ENCODE measurements at regions of chr17 and their contacts with region 1.

Region 1: DNA sequence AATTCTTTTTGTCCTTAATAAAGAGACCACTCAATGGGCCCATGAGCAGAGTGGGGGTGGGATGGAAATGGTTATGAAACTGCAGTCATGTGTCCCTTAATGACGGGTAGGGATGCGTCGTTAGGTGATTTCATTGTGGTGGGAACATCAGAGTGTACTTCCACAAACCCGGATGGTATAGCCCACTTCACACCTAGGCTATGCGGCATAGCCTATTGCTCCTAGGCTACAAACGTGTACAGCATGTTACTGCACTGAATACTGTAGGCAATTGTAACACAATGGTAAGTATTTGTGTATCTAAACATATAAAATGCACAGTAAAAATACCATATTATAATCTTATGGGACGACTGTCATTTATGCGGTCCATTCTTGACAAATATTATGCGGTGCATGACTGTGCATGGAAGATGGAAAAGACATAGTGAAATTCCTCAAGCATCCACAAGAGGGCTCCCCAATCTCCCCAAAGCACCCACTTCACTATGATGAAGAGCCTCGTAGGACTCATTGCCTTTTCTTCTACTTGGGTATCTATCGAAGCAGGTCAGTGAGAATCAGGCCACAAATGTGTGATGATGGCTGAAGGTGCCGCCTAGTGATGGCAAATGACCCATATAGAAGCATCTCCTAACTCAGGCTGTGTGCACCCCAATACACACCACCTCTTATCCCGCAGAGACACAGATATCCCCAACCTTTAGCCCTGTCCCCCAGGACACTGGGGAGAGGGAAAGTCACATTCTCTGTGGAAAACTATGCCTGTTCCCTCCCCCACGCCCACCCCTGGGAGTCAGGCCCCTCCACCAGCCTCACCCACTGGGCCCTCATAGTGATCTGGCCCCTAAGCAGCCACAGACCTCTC is 43.5 kb downstream of the TBX21 start:
- DNase-seq: peak; percentile 29
- H3K4me3 ChIP-seq: no peak overlapping the region
- H3K27ac ChIP-seq: no peak overlapping the region
- H3K4me1 ChIP-seq: no peaks in the 10 kb centered on the region
- H3K27me3 ChIP-seq: peaks cover 17% of the 10 kb centered on the region
- CTCF ChIP-seq: peak; percentile 61 to 75

Region 2: GRCh38 chr17:47725446-47726111 is 51.0 kb before region 1 on chr17:
- CTCF ChIA-PET with region 1: no interaction called
- dilution Hi-C with region 1: loop called (anchors 5 kb)
- in situ Hi-C with region 1: no loop called
- intact Hi-C with region 1: no loop called
- DNase-seq: no peak
- H3K4me3 ChIP-seq: no peak overlapping the region
- H3K27ac ChIP-seq: no peak overlapping the region
- H3K4me1 ChIP-seq: peaks cover 5% of the 10 kb centered on the region
- H3K27me3 ChIP-seq: peaks cover 5% of the 10 kb centered on the region
- CTCF ChIP-seq: no peak

Region 3: DNA sequence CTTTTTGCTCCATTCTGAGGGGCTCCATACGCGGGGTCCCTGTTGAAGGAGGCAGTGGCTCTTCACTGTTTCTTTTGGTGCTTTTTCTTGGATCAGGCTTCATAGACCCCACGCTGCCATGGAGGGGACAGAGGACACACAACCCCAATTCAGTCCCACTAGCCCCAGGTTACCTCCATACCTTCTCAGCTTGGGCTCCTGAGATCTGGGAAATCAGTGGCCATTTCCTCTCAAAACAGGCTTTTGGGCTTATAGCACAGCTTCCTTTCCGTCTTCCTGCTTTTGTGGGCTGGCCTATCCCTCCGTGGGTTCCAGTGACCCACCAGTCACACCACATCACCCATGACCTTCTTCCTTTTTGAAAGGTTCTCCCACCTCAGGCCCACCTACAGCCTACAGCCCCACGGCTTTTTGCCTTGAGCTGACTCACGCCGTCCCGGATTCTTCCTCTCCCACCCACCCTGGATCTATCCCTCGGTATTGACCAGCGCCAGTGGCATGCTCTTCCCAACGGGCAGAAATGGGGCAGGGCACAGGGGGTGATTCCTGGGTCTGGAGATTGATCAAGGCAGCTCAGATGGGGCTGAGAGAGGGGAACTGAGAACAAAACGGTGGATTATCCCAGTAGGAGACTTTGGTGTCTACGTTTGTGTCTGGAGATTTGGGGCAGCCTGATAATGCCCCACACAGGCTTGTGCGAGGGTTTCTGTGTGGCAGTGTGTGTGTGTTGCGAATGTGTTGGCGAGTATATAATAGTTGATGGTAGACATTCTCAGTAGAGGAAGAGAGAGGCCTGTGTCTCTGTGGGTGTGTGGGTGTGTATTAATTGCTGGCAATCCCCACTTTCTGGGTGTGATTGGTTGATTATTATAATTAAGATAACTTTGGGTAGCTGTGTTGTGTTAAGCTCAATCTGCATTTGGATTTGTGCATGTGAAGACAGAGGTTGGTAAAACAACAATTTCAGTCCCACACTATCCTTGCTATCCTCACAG is 39.8 kb before region 1 on chr17:
- CTCF ChIA-PET with region 1: no interaction called
- dilution Hi-C with region 1: no loop called
- in situ Hi-C with region 1: no loop called
- intact Hi-C with region 1: no loop called
- DNase-seq: no peak
- H3K4me3 ChIP-seq: no peak overlapping the region
- H3K27ac ChIP-seq: no peak overlapping the region
- H3K4me1 ChIP-seq: peaks cover 5% of the 10 kb centered on the region
- H3K27me3 ChIP-seq: peaks cover 26% of the 10 kb centered on the region
- CTCF ChIP-seq: no peak

Region 4: DNA sequence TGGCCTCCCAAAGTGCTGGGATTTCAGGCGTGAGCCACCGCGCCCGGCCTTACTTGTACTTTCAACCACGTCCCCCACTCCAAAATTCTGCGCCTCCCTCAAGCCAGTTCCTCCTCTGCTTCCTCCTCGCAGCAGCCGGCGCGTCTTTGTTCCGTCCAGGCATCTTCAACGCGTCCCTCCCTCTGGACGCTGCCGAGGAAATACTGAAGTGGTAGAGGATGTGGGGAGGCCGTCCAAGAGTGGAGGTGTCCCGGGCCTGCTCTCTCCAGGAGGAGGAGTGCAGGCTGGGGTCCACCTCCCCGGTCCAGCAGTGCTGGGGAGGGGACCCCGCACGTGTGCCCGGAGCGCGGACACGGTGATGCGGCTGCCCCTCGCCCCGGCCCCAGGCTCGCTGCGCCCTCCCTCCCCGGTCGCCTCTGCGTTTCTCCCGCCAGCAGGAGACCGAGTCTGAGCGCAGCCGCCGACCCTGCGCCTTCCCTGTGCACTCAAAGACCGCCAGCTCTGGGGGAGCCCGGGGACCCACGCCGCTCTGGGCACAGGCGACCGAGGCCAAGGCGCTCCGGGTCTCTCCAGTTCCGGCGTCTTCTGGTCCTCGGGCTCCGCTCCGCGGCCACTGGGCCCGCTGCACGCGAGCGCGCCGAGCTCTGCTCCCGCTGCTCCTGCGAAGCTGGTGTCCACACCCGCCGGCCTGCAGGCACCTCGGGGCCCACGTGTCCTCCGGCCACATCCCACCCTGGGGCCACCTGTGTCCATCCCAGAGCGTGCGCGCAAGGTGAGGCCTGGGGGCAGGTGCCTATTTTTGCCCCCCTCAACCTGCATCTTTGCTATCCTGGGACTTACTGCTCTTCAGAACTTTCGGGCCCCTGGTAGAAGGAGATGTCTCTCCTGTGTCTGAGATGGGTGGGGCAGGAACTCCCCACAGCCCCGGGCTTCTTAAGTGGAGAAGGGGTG is 13.3 kb after region 1 on chr17:
- CTCF ChIA-PET with region 1: no interaction called
- dilution Hi-C with region 1: no loop called
- in situ Hi-C with region 1: no loop called
- intact Hi-C with region 1: loop called (anchors 1 kb)
- DNase-seq: peak; percentile 50
- H3K4me3 ChIP-seq: peak overlapping the region in 2 of 3 experiments; percentile 32 to 34
- H3K27ac ChIP-seq: no peak overlapping the region
- H3K4me1 ChIP-seq: peaks cover 7% of the 10 kb centered on the region
- H3K27me3 ChIP-seq: peaks cover 22% of the 10 kb centered on the region
- CTCF ChIP-seq: peak; percentile 17 to 50

Region 5: GRCh38 chr17:47831003-47831933 is 54.7 kb after region 1 on chr17 and contains the starts of genes LRRC46 and MRPL10:
- CTCF ChIA-PET with region 1: no interaction called
- dilution Hi-C with region 1: no loop called
- in situ Hi-C with region 1: no loop called
- intact Hi-C with region 1: loop called (anchors 2 kb)
- DNase-seq: peak; percentile 86
- H3K4me3 ChIP-seq: peak within 1 kb of the TSS; percentile 66 to 98 (median 77)
- H3K27ac ChIP-seq: peak within 1 kb of the TSS; percentile 65
- H3K4me1 ChIP-seq: peaks cover 20% of the 10 kb centered on the region
- H3K27me3 ChIP-seq: no peaks in the 10 kb centered on the region
- CTCF ChIP-seq: peak; percentile 51 to 53
- total RNA-seq, gene LRRC46: 0.54 TPM in 1 of 2 donors, not detected in the other
- total RNA-seq, gene MRPL10: 18.2 to 39.4 TPM

Region 6: GRCh38 chr17:47987240-47987835 is 210.8 kb after region 1 on chr17:
- CTCF ChIA-PET with region 1: no interaction called
- dilution Hi-C with region 1: no loop called
- in situ Hi-C with region 1: no loop called
- intact Hi-C with region 1: no loop called
- DNase-seq: no peak
- H3K4me3 ChIP-seq: no peak overlapping the region
- H3K27ac ChIP-seq: no peak overlapping the region
- H3K4me1 ChIP-seq: no peaks in the 10 kb centered on the region
- H3K27me3 ChIP-seq: no peaks in the 10 kb centered on the region
- CTCF ChIP-seq: no peak